ENCODE measurements at regions of chr2 and their contacts with region 1.

Region 1: DNA sequence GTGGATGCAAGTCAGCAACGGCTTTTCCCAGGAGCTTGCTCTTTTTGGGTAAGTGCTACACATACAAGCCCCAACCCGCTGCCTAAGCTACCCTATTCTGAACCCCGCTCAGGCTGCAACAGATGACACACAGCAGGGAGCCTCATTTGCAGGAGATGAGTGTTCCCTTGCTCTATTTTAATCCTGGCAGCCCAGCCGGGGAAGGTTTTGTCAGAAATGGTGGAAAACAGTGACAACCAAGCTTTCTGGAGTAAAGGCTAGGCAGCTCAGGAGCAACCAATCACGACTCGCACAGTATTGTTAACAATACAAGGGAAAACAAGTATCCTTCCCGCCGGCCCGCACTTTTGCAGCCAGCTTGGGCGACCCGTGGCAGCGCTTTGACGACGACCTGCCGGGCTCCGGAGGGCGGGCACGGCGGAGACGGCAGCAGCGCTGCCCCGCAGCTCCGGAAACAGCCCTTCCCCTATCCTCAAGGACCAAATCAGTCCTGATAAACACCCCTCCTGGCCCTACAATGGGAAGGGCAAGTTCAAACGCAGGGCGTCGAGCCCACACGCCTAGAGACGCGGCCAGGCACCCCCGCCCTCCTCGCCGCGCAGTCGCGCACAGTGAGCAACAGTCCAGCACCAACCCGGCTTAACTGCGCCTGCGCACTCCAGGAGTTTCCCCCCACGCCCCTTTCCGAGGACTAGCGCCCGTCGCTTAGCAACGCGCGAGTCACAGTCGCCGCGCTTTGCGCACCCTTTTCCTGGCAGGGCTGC is 74.3 kb upstream of the TSPYL6 start:
- DNase-seq: peak; percentile 94
- H3K4me3 Mint-ChIP-seq: peak overlapping the region; percentile 92
- H3K27ac Mint-ChIP-seq: peak overlapping the region; percentile 37
- H3K4me1 Mint-ChIP-seq: peaks cover 23% of the 10 kb centered on the region
- H3K27me3 Mint-ChIP-seq: no peaks in the 10 kb centered on the region
- CTCF ChIP-seq: no peak

Region 2: DNA sequence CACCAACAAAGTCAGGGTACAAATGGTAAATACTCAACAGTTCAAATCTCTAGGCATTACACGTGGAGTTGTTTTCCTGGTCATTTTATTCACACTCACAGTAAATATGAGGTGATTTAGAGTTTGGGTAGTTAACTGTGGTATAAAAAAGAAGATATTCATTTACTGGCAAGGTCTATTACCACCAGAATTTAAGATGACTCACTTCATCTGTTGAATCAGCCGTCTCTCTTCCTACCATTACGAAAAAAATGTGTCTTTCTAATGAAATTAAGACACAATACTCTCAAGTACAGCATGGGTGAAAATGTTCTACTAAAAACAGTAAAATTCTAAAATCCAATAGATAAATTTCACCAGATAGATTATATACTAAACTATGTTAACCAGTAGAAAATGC is 449.6 kb before region 1 on chr2:
- CTCF ChIA-PET with region 1: no interaction called
- intact Hi-C with region 1: no loop called
- DNase-seq: no peak
- H3K4me3 Mint-ChIP-seq: no peak overlapping the region
- H3K27ac Mint-ChIP-seq: no peak overlapping the region
- H3K4me1 Mint-ChIP-seq: no peaks in the 10 kb centered on the region
- H3K27me3 Mint-ChIP-seq: no peaks in the 10 kb centered on the region
- CTCF ChIP-seq: no peak

Region 3: GRCh38 chr2:54194761-54195750 is 135.3 kb before region 1 on chr2:
- CTCF ChIA-PET with region 1: no interaction called
- intact Hi-C with region 1: no loop called
- DNase-seq: no peak
- H3K4me3 Mint-ChIP-seq: no peak overlapping the region
- H3K27ac Mint-ChIP-seq: no peak overlapping the region
- H3K4me1 Mint-ChIP-seq: no peaks in the 10 kb centered on the region
- H3K27me3 Mint-ChIP-seq: no peaks in the 10 kb centered on the region
- CTCF ChIP-seq: no peak

Region 4: DNA sequence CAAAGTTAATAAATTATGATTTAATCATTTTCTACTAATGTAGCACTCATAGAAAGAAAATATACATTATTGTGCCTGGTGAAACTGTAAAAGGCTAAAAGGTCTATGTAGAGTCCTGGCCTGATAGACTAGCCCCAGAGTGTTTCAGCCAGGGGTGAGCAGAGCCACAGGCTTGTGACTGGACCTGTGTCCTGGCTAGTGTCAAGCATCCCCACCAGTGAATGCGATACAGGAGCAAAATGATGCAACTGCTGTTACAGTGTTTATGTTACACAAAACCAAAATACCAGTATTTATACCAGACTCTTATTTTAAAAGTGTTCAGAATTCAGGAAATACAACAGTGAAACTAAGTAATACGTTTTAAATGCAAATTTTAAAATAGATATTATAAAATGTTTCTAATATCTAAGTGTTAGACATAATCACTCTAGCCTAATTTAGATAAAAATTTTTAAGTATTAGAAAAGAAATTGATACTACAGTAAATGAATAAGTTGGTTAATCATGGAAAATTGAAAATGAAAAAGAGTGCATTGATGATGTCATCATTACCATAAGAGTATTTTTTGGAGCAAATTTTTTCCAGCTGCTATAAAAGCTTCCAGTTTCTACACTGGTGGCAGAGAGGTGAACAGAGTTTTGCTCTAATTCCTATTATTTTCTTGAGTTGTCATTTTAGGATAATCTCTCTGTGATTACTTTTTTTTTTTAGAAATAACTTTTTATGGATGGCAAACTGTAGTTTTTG is 68.2 kb before region 1 on chr2:
- CTCF ChIA-PET with region 1: no interaction called
- intact Hi-C with region 1: no loop called
- DNase-seq: no peak
- H3K4me3 Mint-ChIP-seq: no peak overlapping the region
- H3K27ac Mint-ChIP-seq: no peak overlapping the region
- H3K4me1 Mint-ChIP-seq: no peaks in the 10 kb centered on the region
- H3K27me3 Mint-ChIP-seq: no peaks in the 10 kb centered on the region
- CTCF ChIP-seq: no peak

Region 5: GRCh38 chr2:54455563-54456361 is 125.4 kb after region 1 on chr2 and contains the start of gene SPTBN1:
- CTCF ChIA-PET with region 1: no interaction called
- intact Hi-C with region 1: loop called (anchors 10 kb)
- DNase-seq: peak; percentile 80
- H3K4me3 Mint-ChIP-seq: peak within 1 kb of the TSS; percentile 97
- H3K27ac Mint-ChIP-seq: peak within 1 kb of the TSS; percentile 66
- H3K4me1 Mint-ChIP-seq: peaks cover 31% of the 10 kb centered on the region
- H3K27me3 Mint-ChIP-seq: no peaks in the 10 kb centered on the region
- CTCF ChIP-seq: no peak
- total RNA-seq, gene SPTBN1: 611 and 687 TPM in 2 replicates

Region 6: DNA sequence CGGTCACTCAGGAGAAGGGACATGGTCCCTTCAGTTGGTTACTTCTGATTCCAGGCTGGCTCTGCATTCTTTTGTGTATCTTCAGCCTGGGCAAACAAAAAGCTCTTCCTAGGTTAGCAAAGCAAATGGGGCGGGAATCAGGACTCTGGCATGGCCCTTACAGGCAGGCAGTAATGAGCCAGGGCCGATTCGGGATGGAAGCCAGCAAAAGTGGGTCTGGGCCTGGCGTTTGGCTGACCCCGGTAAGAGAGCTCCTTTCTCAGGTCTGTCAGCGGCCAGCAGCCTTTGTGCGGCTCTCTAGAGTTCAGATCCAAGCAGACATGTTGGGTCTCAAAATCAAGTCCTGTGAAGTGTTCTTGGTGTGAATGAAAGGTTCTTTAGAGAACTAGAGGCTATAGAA is 311.6 kb after region 1 on chr2:
- CTCF ChIA-PET with region 1: no interaction called
- intact Hi-C with region 1: no loop called
- DNase-seq: no peak
- H3K4me3 Mint-ChIP-seq: no peak overlapping the region
- H3K27ac Mint-ChIP-seq: peak overlapping the region; percentile 43
- H3K4me1 Mint-ChIP-seq: peaks cover 28% of the 10 kb centered on the region
- H3K27me3 Mint-ChIP-seq: no peaks in the 10 kb centered on the region
- CTCF ChIP-seq: no peak